ENCODE measurements at regions of chr2 and their contacts with region 1.

Region 1: DNA sequence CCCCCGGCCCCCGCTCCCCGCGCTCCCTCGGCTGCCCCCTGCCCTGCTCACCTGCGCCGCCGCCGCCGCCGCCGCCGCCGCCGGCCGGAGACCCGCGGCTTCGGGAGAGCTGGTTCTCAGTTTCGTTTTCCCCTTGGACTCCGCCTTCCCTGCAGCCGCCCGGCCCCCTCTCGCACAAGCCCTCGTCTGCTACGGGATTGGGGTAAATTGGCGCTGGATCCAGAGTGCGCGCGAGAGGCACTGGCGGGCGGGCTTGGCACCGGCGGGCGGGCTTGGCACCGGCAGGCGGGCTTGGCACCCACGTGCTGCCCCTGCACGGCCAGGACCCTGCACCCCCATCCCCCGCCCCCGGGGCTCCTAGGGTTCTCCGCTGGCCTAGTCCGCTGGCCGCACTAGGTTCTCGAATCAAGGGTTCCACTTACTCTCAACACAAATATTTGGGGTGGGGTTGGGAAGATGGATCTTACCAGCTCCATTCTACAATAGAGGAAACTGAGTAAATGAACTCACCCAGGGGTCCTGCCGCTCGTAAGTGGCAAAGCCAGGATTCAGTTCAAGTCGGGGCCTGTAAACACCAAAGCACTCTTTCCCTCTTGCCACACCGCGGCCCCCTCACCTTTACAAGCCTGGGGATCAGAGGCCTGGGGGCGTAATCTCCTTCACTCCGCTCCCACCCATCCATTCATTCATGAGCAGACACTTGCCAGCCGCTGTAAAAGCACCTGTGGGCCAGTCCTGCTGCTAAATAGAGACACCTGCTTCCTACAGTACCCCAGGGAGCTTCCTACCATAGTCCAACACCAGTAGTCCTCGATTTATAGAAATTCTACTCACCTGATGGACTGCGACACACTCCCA is at the start of gene EIF2AK2:
- DNase-seq: peak; percentile 84
- H3K4me3 ChIP-seq: peak within 1 kb of the TSS; percentile 80 to 96 (median 94)
- H3K27ac ChIP-seq: peak within 1 kb of the TSS; percentile 79
- H3K4me1 ChIP-seq: peaks cover 17% of the 10 kb centered on the region
- H3K27me3 ChIP-seq: no peaks in the 10 kb centered on the region
- CTCF ChIP-seq: no peak
- total RNA-seq, gene EIF2AK2: 30.3 to 38.7 TPM

Region 2: DNA sequence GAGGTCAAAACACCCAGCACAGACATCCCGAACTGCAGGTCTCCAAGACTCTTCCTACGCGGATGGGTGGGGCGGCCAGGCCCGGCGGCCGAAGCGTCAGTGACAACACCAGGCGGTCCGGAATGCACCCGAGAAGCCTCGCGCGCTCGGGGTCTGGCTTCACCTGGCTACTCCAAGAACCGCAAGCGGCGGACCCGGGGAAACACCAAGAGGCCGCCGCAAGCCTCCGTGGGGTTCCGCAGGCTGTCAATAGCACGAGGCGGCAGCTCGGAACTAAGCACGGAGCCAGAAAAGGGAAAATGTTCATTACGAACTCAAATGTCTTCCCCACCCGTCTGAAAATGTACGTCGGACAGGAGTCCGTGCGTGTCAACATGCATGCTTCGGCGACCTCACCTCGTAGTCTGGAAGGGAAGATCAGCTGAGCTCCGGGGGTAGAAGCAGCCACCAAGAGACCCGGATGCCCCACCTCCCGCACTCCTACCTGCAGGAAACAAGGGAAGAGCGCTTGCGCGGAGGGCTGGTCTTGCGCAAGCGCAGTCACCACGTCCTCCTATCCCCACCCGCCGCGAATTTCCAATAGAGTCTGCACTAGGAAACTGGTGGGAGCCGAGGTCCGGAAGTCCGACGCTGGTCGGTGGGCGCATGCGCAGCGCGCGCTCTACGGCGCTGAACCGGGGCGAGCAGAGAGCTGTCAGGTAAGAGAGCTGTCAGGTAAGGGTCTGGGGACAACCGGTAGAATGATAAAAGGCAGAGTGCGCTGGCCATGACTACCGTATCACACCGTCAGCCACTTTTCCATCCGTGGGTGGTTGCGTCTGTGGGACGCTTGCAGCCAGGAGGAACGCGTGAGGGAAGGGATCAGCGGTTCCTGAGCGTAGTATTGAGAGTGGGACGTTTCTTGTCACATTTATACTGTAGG is 73.0 kb before region 1 on chr2 and contains the starts of genes GPATCH11 and HEATR5B:
- CTCF ChIA-PET with region 1: no interaction called
- dilution Hi-C with region 1: loop called (anchors 5 kb)
- in situ Hi-C with region 1: no loop called
- intact Hi-C with region 1: no loop called
- DNase-seq: peak; percentile 96
- H3K4me3 ChIP-seq: peak within 1 kb of the TSS; percentile 81 to 86 (median 82)
- H3K27ac ChIP-seq: peak within 1 kb of the TSS; percentile 74
- H3K4me1 ChIP-seq: peaks cover 23% of the 10 kb centered on the region
- H3K27me3 ChIP-seq: no peaks in the 10 kb centered on the region
- CTCF ChIP-seq: no peak
- total RNA-seq, gene GPATCH11: 4.7 to 7.2 TPM
- total RNA-seq, gene HEATR5B: 18.8 to 32.2 TPM

Region 3: GRCh38 chr2:37196320-37197195 is 39.5 kb after region 1 on chr2 and contains the start of gene CEBPZOS:
- CTCF ChIA-PET with region 1: no interaction called
- dilution Hi-C with region 1: no loop called
- in situ Hi-C with region 1: no loop called
- intact Hi-C with region 1: loop called (anchors 5 kb)
- DNase-seq: peak; percentile 73
- H3K4me3 ChIP-seq: peak within 1 kb of the TSS; percentile 65 to 91 (median 76)
- H3K27ac ChIP-seq: peak within 1 kb of the TSS; percentile 53
- H3K4me1 ChIP-seq: no peaks in the 10 kb centered on the region
- H3K27me3 ChIP-seq: no peaks in the 10 kb centered on the region
- CTCF ChIP-seq: no peak
- total RNA-seq, gene CEBPZOS: 15.2 to 41.5 TPM

Region 4: GRCh38 chr2:37231241-37232130 is 74.4 kb after region 1 on chr2 and contains the starts of genes CEBPZ and NDUFAF7:
- CTCF ChIA-PET with region 1: no interaction called
- dilution Hi-C with region 1: no loop called
- in situ Hi-C with region 1: no loop called
- intact Hi-C with region 1: no loop called
- DNase-seq: peak; percentile 94
- H3K4me3 ChIP-seq: peak within 1 kb of the TSS; percentile 80 to 95 (median 87)
- H3K27ac ChIP-seq: peak within 1 kb of the TSS; percentile 81
- H3K4me1 ChIP-seq: peaks cover 13% of the 10 kb centered on the region
- H3K27me3 ChIP-seq: no peaks in the 10 kb centered on the region
- CTCF ChIP-seq: no peak
- total RNA-seq, gene CEBPZ: 30.2 to 58.7 TPM
- total RNA-seq, gene NDUFAF7: 9.3 to 16.5 TPM

Region 5: GRCh38 chr2:37306024-37306423 is 148.9 kb after region 1 on chr2:
- CTCF ChIA-PET with region 1: no interaction called
- dilution Hi-C with region 1: no loop called
- in situ Hi-C with region 1: no loop called
- intact Hi-C with region 1: no loop called
- DNase-seq: no peak
- H3K4me3 ChIP-seq: no peak overlapping the region
- H3K27ac ChIP-seq: no peak overlapping the region
- H3K4me1 ChIP-seq: peaks cover 3% of the 10 kb centered on the region
- H3K27me3 ChIP-seq: no peaks in the 10 kb centered on the region
- CTCF ChIP-seq: no peak

Measured in mammary epithelial cell (primary cell).